Activated T-helper 1 cell treated with anti-CD3 and anti-CD28 coated beads, Interleukin-12 subunit alpha, Interleukin-12 subunit beta, Interleukin-2, Interleukin-4 antibody, amounts not matched to agents 30 ng/mL and 10 ng/mL and 1 ng/mL, durations not matched to agents 14 hours and 24 hours and 36 hours (primary cell): ENCODE measurements at regions of chr6 and their contacts with region 1.

Region 1: DNA sequence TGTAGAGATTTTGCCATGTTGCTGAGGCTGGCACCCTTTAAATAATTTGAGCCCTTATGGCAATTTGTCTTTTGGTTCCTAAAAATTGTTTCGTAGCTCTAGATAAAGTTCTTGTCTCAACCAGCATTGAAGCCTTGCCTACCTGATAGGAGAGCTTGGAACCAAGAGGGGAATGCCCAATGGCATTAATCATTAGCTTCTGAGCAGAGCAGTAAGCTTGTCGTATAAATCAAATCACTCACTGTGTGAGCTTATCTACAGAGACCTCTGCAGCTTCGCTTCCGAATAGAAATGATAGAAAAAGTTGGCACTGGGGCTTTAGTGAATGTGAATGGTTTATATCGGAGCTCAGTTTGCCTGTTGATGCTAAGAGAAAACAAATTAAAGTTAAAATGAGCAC is 10.7 kb downstream of the ANKRD6 start:
- DNase-seq: no peak
- H3K4me3 Mint-ChIP-seq: no peak overlapping the region
- H3K27ac Mint-ChIP-seq: no peak overlapping the region
- H3K4me1 Mint-ChIP-seq: no peaks in the 10 kb centered on the region
- H3K27me3 Mint-ChIP-seq: no peaks in the 10 kb centered on the region

Region 2: GRCh38 chr6:89458704-89459103 is 15.0 kb after region 1 on chr6:
- intact Hi-C with region 1: no loop called
- DNase-seq: no peak
- H3K4me3 Mint-ChIP-seq: no peak overlapping the region
- H3K27ac Mint-ChIP-seq: no peak overlapping the region
- H3K4me1 Mint-ChIP-seq: no peaks in the 10 kb centered on the region
- H3K27me3 Mint-ChIP-seq: peaks cover 13% of the 10 kb centered on the region

Region 3: DNA sequence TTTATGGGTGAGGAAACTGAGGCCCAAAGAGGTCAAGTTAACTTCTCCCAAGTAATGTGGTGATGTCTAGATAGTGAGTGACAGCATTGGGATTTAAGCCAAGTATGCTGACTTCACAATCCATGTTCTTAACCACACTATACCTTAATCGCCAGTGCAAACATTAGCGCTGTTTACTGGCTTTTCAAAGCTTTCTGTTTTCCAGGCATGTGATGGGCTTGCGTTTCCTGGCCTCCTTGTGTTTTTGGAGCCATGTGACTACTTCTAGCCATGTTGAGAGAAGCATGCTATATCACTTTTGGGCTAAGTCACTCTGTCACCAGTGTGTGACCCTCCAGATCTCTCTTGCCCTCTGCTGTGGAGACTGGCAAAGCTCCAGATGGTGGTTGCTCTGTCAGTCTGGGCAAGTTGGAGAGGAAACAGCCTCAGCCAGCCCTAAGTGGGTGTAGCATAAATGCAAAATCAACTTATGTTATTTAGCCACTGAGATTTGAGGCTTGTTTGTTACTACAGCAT is 66.2 kb after region 1 on chr6:
- intact Hi-C with region 1: loop called (anchors 2 kb)
- DNase-seq: no peak
- H3K4me3 Mint-ChIP-seq: no peak overlapping the region
- H3K27ac Mint-ChIP-seq: no peak overlapping the region
- H3K4me1 Mint-ChIP-seq: no peaks in the 10 kb centered on the region
- H3K27me3 Mint-ChIP-seq: peaks cover 3% of the 10 kb centered on the region

Region 4: GRCh38 chr6:89589297-89590025 is 145.8 kb after region 1 on chr6:
- intact Hi-C with region 1: no loop called
- DNase-seq: no peak
- H3K4me3 Mint-ChIP-seq: no peak overlapping the region
- H3K27ac Mint-ChIP-seq: no peak overlapping the region
- H3K4me1 Mint-ChIP-seq: no peaks in the 10 kb centered on the region
- H3K27me3 Mint-ChIP-seq: peaks cover 4% of the 10 kb centered on the region

Region 5: GRCh38 chr6:89662742-89663404 is 219.2 kb after region 1 on chr6:
- intact Hi-C with region 1: no loop called
- DNase-seq: no peak
- H3K4me3 Mint-ChIP-seq: no peak overlapping the region
- H3K27ac Mint-ChIP-seq: no peak overlapping the region
- H3K4me1 Mint-ChIP-seq: peaks cover 6% of the 10 kb centered on the region
- H3K27me3 Mint-ChIP-seq: no peaks in the 10 kb centered on the region